ENCODE measurements at regions of chr1 and their contacts with region 1.

Region 1: GRCh38 chr1:96721416-96722160 is at the start of gene PTBP2:
- DNase-seq: peak; percentile 82 to 91 (median 88)
- ATAC-seq: peak; percentile 86 to 97 (median 94)
- H3K4me3 ChIP-seq: peak within 1 kb of the TSS; percentile 78 to 98 (median 92)
- H3K27ac ChIP-seq: peak within 1 kb of the TSS; percentile 86 to 98 (median 95)
- H3K4me1 ChIP-seq: peaks cover 0 to 30% (median 17%) of the 10 kb centered on the region in 12 donors
- H3K27me3 ChIP-seq: no peaks in the 10 kb centered on the region
- CTCF ChIP-seq: no peak
- POLR2A ChIP-seq: peak in 1 of 2 donors; percentile 23
- total RNA-seq, gene PTBP2: 9.7 to 17.6 (median 13.4) TPM

Region 2: DNA sequence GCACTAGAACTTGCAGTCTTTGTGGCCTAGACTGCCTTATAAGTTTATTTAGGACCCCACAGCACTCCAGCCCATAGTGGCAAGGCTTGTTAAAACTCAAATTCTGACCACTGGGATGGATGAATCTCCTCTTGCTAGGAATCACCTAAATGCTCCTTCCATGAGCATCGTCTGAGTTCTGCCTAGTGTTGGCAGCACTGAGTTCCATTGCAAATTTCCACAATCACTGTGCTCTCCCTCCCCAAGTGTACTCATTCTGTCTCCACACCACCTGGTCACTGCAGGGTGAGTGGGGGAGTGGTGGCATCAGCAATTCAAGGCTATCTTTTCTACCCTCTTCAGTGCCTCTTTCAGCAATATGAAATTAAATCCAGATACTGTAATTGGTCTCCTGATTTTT is 46.7 kb before region 1 on chr1:
- intact Hi-C with region 1: no loop called
- DNase-seq: no peak
- ATAC-seq: no peak
- H3K4me3 ChIP-seq: no peak overlapping the region
- H3K27ac ChIP-seq: no peak overlapping the region
- H3K4me1 ChIP-seq: no peaks in the 10 kb centered on the region
- H3K27me3 ChIP-seq: no peaks in the 10 kb centered on the region
- CTCF ChIP-seq: no peak
- POLR2A ChIP-seq: no peak

Region 3: GRCh38 chr1:96820107-96820506 is 98.5 kb after region 1 on chr1:
- intact Hi-C with region 1: loop called in 1 of 10 experiments (anchors 10 kb)
- DNase-seq: no peak
- ATAC-seq: no peak
- H3K4me3 ChIP-seq: no peak overlapping the region
- H3K27ac ChIP-seq: no peak overlapping the region
- H3K4me1 ChIP-seq: peaks cover 0 to 4% (median 0%) of the 10 kb centered on the region in 12 donors
- H3K27me3 ChIP-seq: no peaks in the 10 kb centered on the region
- CTCF ChIP-seq: no peak
- POLR2A ChIP-seq: no peak